ENCODE measurements at regions of chr1 and their contacts with region 1.

Region 1: GRCh38 chr1:161045750-161046571 is at the start of gene USF1:
- DNase-seq: peak; percentile 90 to 94
- ATAC-seq: peak; percentile 97 to 98 (median 98)
- H3K4me3 ChIP-seq: peak within 1 kb of the TSS; percentile 65 to 98 (median 86)
- H3K27ac ChIP-seq: peak within 1 kb of the TSS; percentile 86 to 98 (median 95)
- H3K4me1 ChIP-seq: peaks cover 0 to 53% (median 17%) of the 10 kb centered on the region in 9 donors
- H3K27me3 ChIP-seq: no peaks in the 10 kb centered on the region
- CTCF ChIP-seq: no peak
- total RNA-seq, gene USF1: 23.7 to 43.6 (median 28.5) TPM

Region 2: DNA sequence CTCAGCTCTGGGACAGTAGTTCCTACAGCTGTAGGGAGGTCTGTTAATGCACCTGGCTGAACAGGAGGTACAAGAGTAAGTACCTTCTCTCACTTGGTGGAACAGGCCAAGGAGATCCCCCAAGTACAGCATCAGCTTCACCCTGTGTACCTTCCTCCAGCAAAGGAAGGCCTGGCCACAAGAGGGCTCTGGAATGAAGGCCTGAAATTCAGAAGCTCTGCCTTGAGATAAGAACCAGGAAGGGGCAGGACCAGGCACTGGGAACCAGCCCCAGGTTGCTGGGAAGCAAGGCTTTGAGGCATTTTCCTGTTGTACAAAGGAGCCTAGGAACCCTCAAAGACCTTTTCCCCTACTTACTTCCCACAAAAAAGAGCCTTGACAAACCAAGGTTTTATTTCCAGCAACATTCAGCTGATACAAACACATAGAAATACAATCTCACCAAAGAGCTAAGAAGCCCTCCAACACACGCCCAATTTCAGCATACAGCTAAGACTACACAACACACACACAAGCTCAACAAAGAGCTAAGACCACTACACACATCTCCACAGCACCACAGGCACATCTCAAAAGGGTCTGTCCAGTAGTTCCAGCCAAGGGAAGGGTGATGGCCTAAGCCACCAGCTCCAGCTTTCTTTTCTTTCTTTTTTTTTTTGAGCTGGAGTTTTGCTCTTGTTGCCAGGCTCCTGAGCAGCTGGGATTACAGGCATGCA is 48.5 kb before region 1 on chr1:
- intact Hi-C with region 1: loop called in 6 of 10 experiments (anchors 1 to 10 kb)
- DNase-seq: peak; percentile 45 to 83
- ATAC-seq: peak; percentile 89 to 95 (median 92)
- H3K4me3 ChIP-seq: no peak overlapping the region
- H3K27ac ChIP-seq: peak overlapping the region in 9 of 10 donors; percentile 47 to 82 (median 75)
- H3K4me1 ChIP-seq: peaks cover 0 to 30% (median 12%) of the 10 kb centered on the region in 9 donors
- H3K27me3 ChIP-seq: no peaks in the 10 kb centered on the region
- CTCF ChIP-seq: peak; percentile 43 to 83 (median 68)

Region 3: DNA sequence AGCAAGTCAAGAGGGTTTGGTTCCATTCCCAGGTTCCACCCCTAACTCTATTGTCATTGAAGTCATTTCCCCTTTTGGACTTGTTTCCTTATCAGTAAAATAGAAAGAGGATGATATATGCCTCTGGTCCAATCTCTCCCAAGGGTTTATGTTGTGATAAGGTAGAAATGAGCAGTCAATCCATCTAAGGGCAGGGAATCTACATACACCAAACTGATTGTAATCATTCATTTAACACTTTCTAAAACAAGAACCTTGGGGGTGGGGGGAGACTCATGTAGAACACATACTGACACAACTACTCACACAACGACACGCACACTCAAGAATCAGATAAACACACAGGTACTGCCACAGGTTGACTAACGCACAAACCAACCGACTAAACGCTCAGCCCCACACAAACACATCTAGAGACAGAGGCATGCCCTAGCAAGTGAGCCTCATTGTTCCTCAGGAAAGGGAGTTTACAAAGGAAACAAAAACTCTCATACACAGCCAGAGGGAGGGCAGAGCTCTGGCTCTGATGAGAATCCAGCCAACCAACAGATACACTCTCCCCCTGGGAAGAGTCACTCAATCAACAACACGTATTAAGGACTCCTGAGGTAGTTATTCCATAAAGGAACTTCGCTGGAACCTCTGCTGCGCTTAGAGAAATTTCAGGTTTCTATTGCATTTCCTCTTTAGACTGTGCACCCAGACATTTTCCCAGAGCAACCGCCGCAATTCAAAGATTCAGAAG is 26.0 kb before region 1 on chr1:
- intact Hi-C with region 1: loop called in 1 of 10 experiments (anchors 2 kb)
- DNase-seq: peak in 1 of 2 donors; percentile 51
- ATAC-seq: peak; percentile 55 to 86 (median 78)
- H3K4me3 ChIP-seq: peak overlapping the region; percentile 54 to 76 (median 68)
- H3K27ac ChIP-seq: peak overlapping the region; percentile 40 to 97 (median 90)
- H3K4me1 ChIP-seq: peaks cover 0 to 59% (median 22%) of the 10 kb centered on the region in 9 donors
- H3K27me3 ChIP-seq: peaks cover 0 to 11% (median 0%) of the 10 kb centered on the region in 7 donors
- CTCF ChIP-seq: no peak

Region 4: GRCh38 chr1:161117759-161118581 is 72.0 kb after region 1 on chr1 and contains the starts of genes NIT1 and PFDN2:
- intact Hi-C with region 1: loop called in 1 of 10 experiments (anchors 5 kb)
- DNase-seq: peak; percentile 87 to 88
- ATAC-seq: peak; percentile 91 to 95 (median 94)
- H3K4me3 ChIP-seq: peak within 1 kb of the TSS; percentile 70 to 100 (median 94)
- H3K27ac ChIP-seq: peak within 1 kb of the TSS; percentile 73 to 97 (median 94)
- H3K4me1 ChIP-seq: peaks cover 14 to 83% (median 53%) of the 10 kb centered on the region in 9 donors
- H3K27me3 ChIP-seq: no peaks in the 10 kb centered on the region
- CTCF ChIP-seq: peak in 1 of 9 donors; percentile 17
- total RNA-seq, gene NIT1: 24.1 to 41.2 (median 33.4) TPM
- total RNA-seq, gene PFDN2: 44.6 to 78.7 (median 54.1) TPM

Region 5: DNA sequence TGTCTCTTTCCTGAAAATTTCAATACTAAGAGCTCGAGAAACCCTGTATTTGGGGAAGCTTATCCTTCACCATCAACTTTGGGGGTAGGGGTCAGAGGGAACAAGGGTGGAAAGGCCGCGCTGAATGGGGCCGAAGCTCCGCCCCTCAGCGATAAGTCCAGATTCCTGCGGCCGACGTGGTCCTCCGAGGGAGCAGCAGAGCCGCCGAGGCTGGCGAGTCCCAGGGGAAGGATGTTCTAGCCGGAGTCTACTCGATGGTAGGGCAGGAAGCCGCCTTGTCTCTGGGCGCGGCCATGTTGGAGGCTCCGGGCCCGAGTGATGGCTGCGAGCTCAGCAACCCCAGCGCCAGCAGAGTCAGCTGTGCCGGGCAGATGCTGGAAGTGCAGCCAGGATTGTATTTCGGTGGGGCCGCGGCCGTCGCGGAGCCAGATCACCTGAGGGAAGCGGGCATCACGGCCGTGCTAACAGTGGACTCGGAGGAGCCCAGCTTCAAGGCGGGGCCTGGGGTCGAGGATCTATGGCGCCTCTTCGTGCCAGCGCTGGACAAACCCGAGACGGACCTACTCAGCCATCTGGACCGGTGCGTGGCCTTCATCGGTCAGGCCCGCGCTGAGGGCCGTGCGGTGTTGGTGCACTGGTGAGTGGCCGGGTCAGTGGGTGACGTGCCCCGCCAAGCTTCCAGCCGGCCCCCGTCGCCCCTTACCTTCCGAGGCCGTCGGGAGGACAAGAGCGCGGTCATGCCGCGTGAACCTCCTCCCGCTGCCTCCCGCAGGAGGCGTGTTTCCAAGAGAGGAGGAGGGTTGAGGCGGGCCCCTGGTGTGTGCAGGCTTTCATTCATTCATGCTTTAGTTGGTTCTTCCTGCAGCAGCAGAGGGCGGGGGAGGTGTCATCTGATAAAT is 703.8 kb after region 1 on chr1 and contains the start of gene DUSP12:
- intact Hi-C with region 1: loop called in 1 of 10 experiments (anchors 5 kb)
- DNase-seq: peak; percentile 92 to 96
- ATAC-seq: peak; percentile 99 to 100 (median 100)
- H3K4me3 ChIP-seq: peak within 1 kb of the TSS; percentile 60 to 98 (median 88)
- H3K27ac ChIP-seq: peak within 1 kb of the TSS; percentile 70 to 95 (median 89)
- H3K4me1 ChIP-seq: peaks cover 4 to 27% (median 14%) of the 10 kb centered on the region in 9 donors
- H3K27me3 ChIP-seq: peaks cover 0 to 13% (median 0%) of the 10 kb centered on the region in 7 donors
- CTCF ChIP-seq: peak in 4 of 9 donors; percentile 27 to 48 (median 40)
- total RNA-seq, gene DUSP12: 3.5 to 10.2 (median 6.6) TPM